ENCODE measurements at regions of chr4 and their contacts with region 1.

Region 1: DNA sequence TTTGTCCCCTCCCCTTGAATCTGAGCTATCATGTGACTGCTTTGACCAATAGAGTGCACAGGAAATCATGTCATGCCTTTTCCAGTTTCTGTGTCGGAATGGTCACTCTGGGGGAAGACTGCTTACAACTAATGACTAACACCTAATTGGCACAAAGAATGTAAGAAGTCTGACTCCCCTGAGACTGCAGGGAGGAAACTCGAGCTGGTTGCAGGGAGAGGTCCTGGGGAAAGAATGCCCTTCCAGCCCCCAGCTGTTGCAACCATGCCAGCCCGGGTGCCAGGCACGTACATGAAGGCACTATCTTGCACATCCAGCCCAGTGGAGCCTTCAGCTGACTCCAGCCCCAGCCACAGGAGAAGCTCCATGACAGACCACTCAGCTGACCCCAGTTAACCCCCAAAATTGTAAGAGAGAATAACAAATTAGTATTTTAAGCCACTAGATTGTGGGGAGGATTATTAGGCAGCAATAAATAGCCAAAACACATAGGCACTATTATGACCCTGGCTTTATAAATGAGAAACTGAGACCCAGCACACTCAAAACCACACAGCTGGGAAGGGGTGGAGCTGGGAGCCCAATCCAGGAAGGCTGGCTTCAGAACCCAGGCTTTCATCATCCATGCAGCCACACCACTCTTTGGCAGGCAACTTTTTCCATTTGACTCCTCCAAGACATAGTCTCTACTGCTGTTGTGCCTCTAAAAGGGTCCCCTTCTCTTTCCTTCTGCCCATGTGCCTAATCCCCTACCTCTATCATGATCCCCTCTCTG is 254.0 kb downstream of the DHX15 start:
- DNase-seq: no peak
- H3K4me3 ChIP-seq: no peak overlapping the region
- H3K27ac ChIP-seq: no peak overlapping the region
- H3K4me1 ChIP-seq: no peaks in the 10 kb centered on the region
- H3K27me3 ChIP-seq: no peaks in the 10 kb centered on the region
- CTCF ChIP-seq: no peak
- POLR2A ChIP-seq: no peak

Region 2: GRCh38 chr4:22634541-22635181 is 1695.7 kb before region 1 on chr4:
- intact Hi-C with region 1: loop called (anchors 10 kb)
- DNase-seq: no peak
- H3K4me3 ChIP-seq: peak overlapping the region in 1 of 3 donors; percentile 51
- H3K27ac ChIP-seq: no peak overlapping the region
- H3K4me1 ChIP-seq: no peaks in the 10 kb centered on the region
- H3K27me3 ChIP-seq: no peaks in the 10 kb centered on the region
- CTCF ChIP-seq: no peak
- POLR2A ChIP-seq: no peak

Region 3: DNA sequence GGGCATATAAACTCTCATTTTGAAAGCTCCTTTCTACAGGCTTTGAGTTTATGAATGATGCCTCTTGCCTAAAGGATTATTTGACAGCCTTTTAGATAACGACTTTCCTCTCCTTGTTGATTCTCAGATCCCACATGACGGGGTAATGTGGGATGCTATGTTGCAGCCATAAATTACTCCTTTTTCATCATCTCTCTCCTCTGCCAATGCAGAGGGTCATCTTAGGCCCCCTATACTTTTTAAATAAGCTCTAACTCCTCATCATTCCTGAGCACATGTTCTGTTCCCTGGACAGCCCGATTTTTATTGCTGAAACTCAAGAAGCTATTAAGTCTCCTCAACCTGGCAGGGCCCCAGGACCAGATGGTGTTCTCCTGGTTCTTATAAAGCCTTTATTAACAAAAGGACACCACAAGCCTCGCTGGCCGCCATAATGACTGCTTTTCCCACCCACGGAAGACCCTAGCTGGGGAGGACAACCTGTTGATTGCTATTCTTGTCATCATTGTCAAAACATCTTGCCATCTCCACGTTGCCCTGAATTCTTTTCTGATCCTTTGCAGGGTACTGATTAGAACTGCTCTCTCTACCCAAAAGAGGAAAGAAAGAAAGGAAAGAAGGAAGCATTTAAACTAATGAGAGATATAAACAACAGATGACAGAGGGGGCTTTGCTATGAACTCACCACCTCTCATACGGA is 103.3 kb after region 1 on chr4:
- intact Hi-C with region 1: loop called (anchors 5 kb)
- DNase-seq: no peak
- H3K4me3 ChIP-seq: no peak overlapping the region
- H3K27ac ChIP-seq: no peak overlapping the region
- H3K4me1 ChIP-seq: no peaks in the 10 kb centered on the region
- H3K27me3 ChIP-seq: no peaks in the 10 kb centered on the region
- CTCF ChIP-seq: no peak
- POLR2A ChIP-seq: no peak

Region 4: GRCh38 chr4:25209702-25210101 is 879.3 kb after region 1 on chr4:
- intact Hi-C with region 1: loop called (anchors 5 kb)
- DNase-seq: no peak
- H3K4me3 ChIP-seq: no peak overlapping the region
- H3K27ac ChIP-seq: no peak overlapping the region
- H3K4me1 ChIP-seq: no peaks in the 10 kb centered on the region
- H3K27me3 ChIP-seq: no peaks in the 10 kb centered on the region
- CTCF ChIP-seq: no peak
- POLR2A ChIP-seq: no peak